GM13976 (cell line): ENCODE measurements at regions of chr10 and their contacts with region 1.

Region 1: GRCh38 chr10:120423431-120424197 is 33.4 kb upstream of the PLPP4 start:
- DNase-seq: peak; percentile 57
- CTCF ChIP-seq: peak; percentile 86

Region 2: DNA sequence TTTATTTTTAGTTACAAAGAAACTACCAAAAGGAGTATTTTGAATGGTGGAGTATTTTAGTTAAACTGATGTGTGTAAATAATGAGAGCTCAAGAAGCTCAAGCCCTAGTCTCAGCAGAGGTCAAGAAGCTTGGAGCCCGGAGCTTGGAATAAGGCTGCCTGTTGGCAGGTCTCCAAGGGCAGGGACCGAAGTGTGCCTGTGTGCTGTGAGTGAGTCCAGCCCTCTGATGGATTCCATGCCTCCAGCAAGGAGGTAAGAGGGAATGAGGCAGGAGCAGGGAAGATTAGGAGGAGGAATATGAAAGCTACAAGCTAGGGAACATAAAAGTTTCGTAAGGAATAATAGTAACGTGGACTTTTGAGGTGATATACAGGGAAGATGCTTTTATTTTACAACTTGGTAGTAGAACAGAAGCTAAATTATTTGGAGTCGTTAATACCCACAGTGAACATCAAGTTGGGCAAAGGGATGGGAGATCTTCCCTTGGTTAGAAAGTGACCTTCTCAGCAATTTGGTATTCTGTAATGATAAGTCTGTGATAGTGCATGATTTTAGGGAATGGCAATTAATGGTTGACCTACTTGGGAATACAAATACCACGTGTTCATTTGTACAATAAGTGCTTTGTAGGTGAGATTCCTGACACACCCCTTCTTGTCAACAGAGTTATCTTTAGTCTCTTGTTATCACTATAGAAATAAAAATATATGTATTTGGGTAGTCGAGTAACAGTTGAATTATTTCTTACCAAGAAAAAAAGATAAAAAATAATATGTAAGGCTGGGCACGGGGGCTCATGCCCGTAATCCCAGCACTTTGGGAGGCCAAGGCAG is 526.5 kb before region 1 on chr10:
- in situ Hi-C with region 1: no loop called
- DNase-seq: no peak
- CTCF ChIP-seq: no peak

Region 3: GRCh38 chr10:120278069-120278468 is 145.5 kb before region 1 on chr10:
- in situ Hi-C with region 1: no loop called
- DNase-seq: no peak
- CTCF ChIP-seq: no peak

Region 4: DNA sequence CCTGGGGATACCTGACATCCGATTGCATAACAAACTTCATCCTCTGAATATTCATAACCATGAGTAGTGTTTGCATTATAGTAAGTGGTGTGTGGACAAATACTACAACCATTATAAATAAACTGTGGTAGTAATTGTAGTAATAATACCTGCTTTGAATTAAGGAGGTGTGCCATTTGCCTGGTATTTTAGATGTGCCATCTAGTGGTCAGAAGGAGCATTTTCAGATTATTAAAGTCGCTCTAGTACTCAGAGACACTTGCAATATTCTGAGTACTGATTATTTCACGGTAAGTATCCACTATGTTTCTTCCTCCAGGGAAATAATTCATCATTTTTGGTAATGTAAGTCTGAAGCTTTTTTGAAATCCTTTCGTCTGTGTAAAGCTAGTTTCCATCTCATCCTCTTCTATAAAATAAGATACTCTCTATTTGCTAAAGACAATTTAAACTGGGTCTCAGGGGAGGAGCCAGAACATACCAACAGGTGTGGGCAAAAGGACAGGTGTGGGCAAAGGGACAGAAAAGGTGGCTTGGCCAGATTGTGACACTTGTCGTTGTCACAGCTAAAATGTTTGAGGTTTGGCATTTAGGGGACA is 312.3 kb after region 1 on chr10:
- in situ Hi-C with region 1: loop called (anchors 10 kb)
- DNase-seq: peak; percentile 43
- CTCF ChIP-seq: peak; percentile 61